Activated T-helper 2 cell treated with anti-CD3 and anti-CD28 coated beads, Interferon-gamma antibody, Interleukin-2, Interleukin-4, amounts not matched to agents 10 μg/mL and 5 μg/mL and 100 μg/mL, durations not matched to agents 14 hours and 24 hours and 36 hours (primary cell): ENCODE measurements at regions of chr7 and their contacts with region 1.

Region 1: DNA sequence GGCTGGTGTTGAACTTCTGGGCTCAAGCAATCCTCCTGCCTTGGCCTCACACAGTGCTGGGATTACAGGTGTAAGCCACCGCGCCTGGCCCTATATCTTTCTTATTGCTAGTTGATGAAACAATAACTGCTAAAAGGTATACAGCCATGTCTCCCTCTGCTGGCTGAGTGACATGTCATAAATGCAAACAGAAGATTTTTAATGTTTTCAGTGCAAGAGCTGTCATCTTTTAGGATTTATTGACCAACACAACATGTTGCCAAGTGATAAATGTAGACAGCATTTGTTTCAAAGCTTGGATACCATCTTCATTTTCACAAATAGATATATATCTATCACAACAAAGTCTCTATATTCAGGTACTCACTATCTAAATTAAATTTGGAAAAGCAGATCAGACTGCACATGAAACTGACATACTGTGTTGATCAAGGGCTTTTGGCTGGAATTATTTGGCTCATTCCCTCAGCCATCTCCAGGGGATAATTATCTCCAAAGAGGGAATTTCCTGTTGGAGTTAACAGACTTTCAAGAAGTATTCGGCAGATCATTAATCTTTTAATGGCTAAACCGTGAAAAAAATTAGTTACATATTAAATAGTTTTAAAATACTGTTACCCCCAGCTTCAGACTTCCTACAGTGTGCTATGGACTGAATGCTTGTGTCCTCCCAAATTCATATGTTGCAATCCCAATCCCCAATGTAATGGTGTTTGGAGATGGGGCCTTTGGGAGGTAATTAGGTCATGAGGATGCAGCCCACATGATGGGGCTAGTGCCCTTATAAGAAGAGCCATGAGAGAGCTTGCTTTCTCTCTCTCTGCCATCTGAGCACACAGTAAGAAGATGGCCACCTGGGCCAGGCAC is 41.3 kb upstream of the SRPK2 start:
- DNase-seq: peak; percentile 19
- H3K4me3 Mint-ChIP-seq: no peak overlapping the region
- H3K27ac Mint-ChIP-seq: no peak overlapping the region
- H3K4me1 Mint-ChIP-seq: peaks cover 12% of the 10 kb centered on the region
- H3K27me3 Mint-ChIP-seq: no peaks in the 10 kb centered on the region

Region 2: DNA sequence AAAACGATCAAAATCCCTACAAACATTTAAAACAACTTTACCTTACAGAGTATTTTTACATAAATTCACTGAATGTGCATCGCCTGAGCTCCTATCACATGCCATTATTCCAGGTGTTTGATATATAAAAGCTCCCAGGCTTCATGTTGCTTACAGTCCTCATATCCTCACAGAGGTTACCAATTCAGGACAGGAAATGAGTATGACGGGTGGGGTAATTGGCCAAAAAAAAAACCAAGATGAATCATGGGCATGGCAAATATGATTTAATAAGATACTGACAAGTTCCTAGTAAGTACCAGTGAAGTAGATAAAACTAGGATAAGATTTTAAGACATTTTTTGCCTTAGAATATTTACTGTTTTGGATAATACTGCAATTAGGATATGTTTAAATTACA is 280.2 kb before region 1 on chr7:
- intact Hi-C with region 1: loop called (anchors 1 kb)
- DNase-seq: no peak
- H3K4me3 Mint-ChIP-seq: no peak overlapping the region
- H3K27ac Mint-ChIP-seq: no peak overlapping the region
- H3K4me1 Mint-ChIP-seq: peaks cover 18% of the 10 kb centered on the region
- H3K27me3 Mint-ChIP-seq: no peaks in the 10 kb centered on the region

Region 3: GRCh38 chr7:105346593-105347322 is 83.2 kb before region 1 on chr7:
- intact Hi-C with region 1: loop called (anchors 5 kb)
- DNase-seq: no peak
- H3K4me3 Mint-ChIP-seq: peak overlapping the region; percentile 17
- H3K27ac Mint-ChIP-seq: peak overlapping the region; percentile 47
- H3K4me1 Mint-ChIP-seq: peaks cover 39% of the 10 kb centered on the region
- H3K27me3 Mint-ChIP-seq: no peaks in the 10 kb centered on the region

Region 4: GRCh38 chr7:105512415-105512814 is 82.4 kb after region 1 on chr7:
- intact Hi-C with region 1: loop called (anchors 5 kb)
- DNase-seq: no peak
- H3K4me3 Mint-ChIP-seq: peak overlapping the region; percentile 1
- H3K27ac Mint-ChIP-seq: peak overlapping the region; percentile 65
- H3K4me1 Mint-ChIP-seq: peaks cover 28% of the 10 kb centered on the region
- H3K27me3 Mint-ChIP-seq: no peaks in the 10 kb centered on the region